ENCODE measurements at regions of chr1 and their contacts with region 1.

Region 1: GRCh38 chr1:89632657-89633247 is at the start of gene LRRC8C:
- DNase-seq: peak; percentile 80 to 96 (median 86)
- ATAC-seq: peak; percentile 77
- H3K4me3 ChIP-seq: peak within 1 kb of the TSS; percentile 80 to 92
- H3K4me3 Mint-ChIP-seq: peak within 1 kb of the TSS; percentile 96
- H3K27ac ChIP-seq: peak within 1 kb of the TSS; percentile 89 to 92
- H3K27ac Mint-ChIP-seq: peak within 1 kb of the TSS; percentile 98
- H3K4me1 ChIP-seq: peaks cover 65% of the 10 kb centered on the region
- H3K4me1 Mint-ChIP-seq: peaks cover 75% of the 10 kb centered on the region
- H3K27me3 ChIP-seq: no peaks in the 10 kb centered on the region
- H3K27me3 Mint-ChIP-seq: no peaks in the 10 kb centered on the region
- CTCF ChIP-seq: peak; percentile 53
- total RNA-seq, gene LRRC8C: 24.0 to 26.7 TPM

Region 2: GRCh38 chr1:89322402-89322801 is 310.4 kb before region 1 on chr1:
- CTCF ChIA-PET with region 1: no interaction called
- POLR2A ChIA-PET with region 1: no interaction called
- intact Hi-C with region 1: no loop called
- DNase-seq: no peak
- ATAC-seq: no peak
- H3K4me3 ChIP-seq: no peak overlapping the region
- H3K4me3 Mint-ChIP-seq: no peak overlapping the region
- H3K27ac ChIP-seq: no peak overlapping the region
- H3K27ac Mint-ChIP-seq: no peak overlapping the region
- H3K4me1 ChIP-seq: no peaks in the 10 kb centered on the region
- H3K4me1 Mint-ChIP-seq: peaks cover 3% of the 10 kb centered on the region
- H3K27me3 ChIP-seq: no peaks in the 10 kb centered on the region
- H3K27me3 Mint-ChIP-seq: no peaks in the 10 kb centered on the region
- CTCF ChIP-seq: no peak

Region 3: DNA sequence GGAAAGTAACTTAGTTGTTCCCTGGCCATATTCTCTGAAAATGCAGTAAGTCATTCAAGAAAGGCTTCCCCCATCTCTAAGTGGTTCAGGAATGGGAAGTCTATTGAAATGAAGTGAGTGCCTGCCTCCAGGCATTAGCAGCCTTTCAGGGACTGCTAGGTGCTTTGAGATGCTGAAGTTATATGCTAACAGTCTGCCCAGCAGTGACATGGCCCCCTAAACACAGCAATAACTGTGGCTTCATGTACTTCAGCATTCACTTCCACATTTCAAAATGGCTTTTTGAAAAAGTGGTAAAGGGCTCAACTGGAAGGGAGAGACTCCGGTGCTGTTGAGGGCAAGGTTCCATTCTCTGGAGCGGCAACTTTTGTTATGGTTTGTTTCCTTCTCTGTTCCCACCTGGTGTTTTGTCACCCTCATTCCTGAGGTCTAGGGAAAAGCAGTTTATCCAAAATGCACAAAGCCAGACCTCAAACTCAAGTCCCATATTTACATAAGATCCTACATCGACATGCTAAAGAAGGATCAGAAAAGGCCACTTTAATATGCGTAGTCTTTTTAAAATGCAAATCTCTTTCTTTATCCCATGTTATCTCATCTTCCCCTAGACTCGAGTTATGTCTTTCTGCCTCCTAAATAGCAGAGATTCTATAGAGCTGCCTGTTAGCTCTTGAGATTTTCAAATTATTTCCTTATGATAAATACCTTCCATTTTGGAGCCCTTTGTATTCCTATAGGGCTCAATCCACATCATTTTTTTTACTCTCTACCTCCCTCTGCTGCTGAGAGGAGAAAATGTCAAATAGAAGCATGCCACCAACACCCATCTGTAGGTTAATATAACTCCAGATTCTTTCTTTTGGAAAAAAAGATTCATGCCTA is 34.1 kb before region 1 on chr1:
- CTCF ChIA-PET with region 1: interaction called, 401 read pairs
- POLR2A ChIA-PET with region 1: interaction called, 285 read pairs
- intact Hi-C with region 1: loop called in 1 of 2 experiments (anchors 2 kb)
- DNase-seq: peak in 2 of 9 experiments; percentile 55 to 67
- ATAC-seq: peak; percentile 64
- H3K4me3 ChIP-seq: no peak overlapping the region
- H3K4me3 Mint-ChIP-seq: no peak overlapping the region
- H3K27ac ChIP-seq: no peak overlapping the region
- H3K27ac Mint-ChIP-seq: peak overlapping the region; percentile 66
- H3K4me1 ChIP-seq: peaks cover 49% of the 10 kb centered on the region
- H3K4me1 Mint-ChIP-seq: peaks cover 83% of the 10 kb centered on the region
- H3K27me3 ChIP-seq: no peaks in the 10 kb centered on the region
- H3K27me3 Mint-ChIP-seq: no peaks in the 10 kb centered on the region
- CTCF ChIP-seq: peak; percentile 70

Region 4: GRCh38 chr1:89649783-89650182 is 17.0 kb after region 1 on chr1:
- CTCF ChIA-PET with region 1: interaction called, 4 read pairs
- POLR2A ChIA-PET with region 1: interaction called, 5 read pairs
- intact Hi-C with region 1: loop called (anchors 1 to 2 kb)
- DNase-seq: no peak
- ATAC-seq: no peak
- H3K4me3 ChIP-seq: no peak overlapping the region
- H3K4me3 Mint-ChIP-seq: peak overlapping the region; percentile 9
- H3K27ac ChIP-seq: peak overlapping the region in 1 of 2 experiments; percentile 39
- H3K27ac Mint-ChIP-seq: peak overlapping the region; percentile 73
- H3K4me1 ChIP-seq: peaks cover 54% of the 10 kb centered on the region
- H3K4me1 Mint-ChIP-seq: peaks cover 70% of the 10 kb centered on the region
- H3K27me3 ChIP-seq: no peaks in the 10 kb centered on the region
- H3K27me3 Mint-ChIP-seq: no peaks in the 10 kb centered on the region
- CTCF ChIP-seq: no peak

Region 5: GRCh38 chr1:89692601-89693521 is 60.1 kb after region 1 on chr1:
- CTCF ChIA-PET with region 1: interaction called, 6 read pairs
- POLR2A ChIA-PET with region 1: interaction called, 4 read pairs
- intact Hi-C with region 1: loop called (anchors 2 kb)
- DNase-seq: no peak
- ATAC-seq: no peak
- H3K4me3 ChIP-seq: no peak overlapping the region
- H3K4me3 Mint-ChIP-seq: no peak overlapping the region
- H3K27ac ChIP-seq: peak overlapping the region in 1 of 2 experiments; percentile 41
- H3K27ac Mint-ChIP-seq: peak overlapping the region; percentile 89
- H3K4me1 ChIP-seq: peaks cover 52% of the 10 kb centered on the region
- H3K4me1 Mint-ChIP-seq: peaks cover 83% of the 10 kb centered on the region
- H3K27me3 ChIP-seq: no peaks in the 10 kb centered on the region
- H3K27me3 Mint-ChIP-seq: no peaks in the 10 kb centered on the region
- CTCF ChIP-seq: no peak

Region 6: GRCh38 chr1:89762779-89763648 is 130.3 kb after region 1 on chr1:
- CTCF ChIA-PET with region 1: interaction called, 340 read pairs
- POLR2A ChIA-PET with region 1: interaction called, 61 read pairs
- intact Hi-C with region 1: loop called (anchors 1 kb)
- DNase-seq: peak; percentile 80 to 93 (median 88)
- ATAC-seq: peak; percentile 100
- H3K4me3 ChIP-seq: peak overlapping the region; percentile 54 to 59
- H3K4me3 Mint-ChIP-seq: peak overlapping the region; percentile 89
- H3K27ac ChIP-seq: peak overlapping the region; percentile 27 to 46
- H3K27ac Mint-ChIP-seq: peak overlapping the region; percentile 91
- H3K4me1 ChIP-seq: peaks cover 38% of the 10 kb centered on the region
- H3K4me1 Mint-ChIP-seq: peaks cover 50% of the 10 kb centered on the region
- H3K27me3 ChIP-seq: no peaks in the 10 kb centered on the region
- H3K27me3 Mint-ChIP-seq: no peaks in the 10 kb centered on the region
- CTCF ChIP-seq: peak; percentile 84

Region 7: GRCh38 chr1:89994805-89995597 is 362.2 kb after region 1 on chr1 and contains the start of gene ZNF326:
- CTCF ChIA-PET with region 1: no interaction called
- POLR2A ChIA-PET with region 1: no interaction called
- intact Hi-C with region 1: loop called in 1 of 2 experiments (anchors 2 kb)
- DNase-seq: peak; percentile 89 to 96 (median 93)
- ATAC-seq: peak; percentile 97
- H3K4me3 ChIP-seq: peak within 1 kb of the TSS; percentile 72 to 93
- H3K4me3 Mint-ChIP-seq: peak within 1 kb of the TSS; percentile 99
- H3K27ac ChIP-seq: peak within 1 kb of the TSS; percentile 78 to 82
- H3K27ac Mint-ChIP-seq: peak within 1 kb of the TSS; percentile 96
- H3K4me1 ChIP-seq: peaks cover 25% of the 10 kb centered on the region
- H3K4me1 Mint-ChIP-seq: peaks cover 35% of the 10 kb centered on the region
- H3K27me3 ChIP-seq: no peaks in the 10 kb centered on the region
- H3K27me3 Mint-ChIP-seq: no peaks in the 10 kb centered on the region
- CTCF ChIP-seq: no peak
- total RNA-seq, gene ZNF326: 55.5 to 59.1 TPM